ENCODE measurements at regions of chr3 and their contacts with region 1.

Region 1: DNA sequence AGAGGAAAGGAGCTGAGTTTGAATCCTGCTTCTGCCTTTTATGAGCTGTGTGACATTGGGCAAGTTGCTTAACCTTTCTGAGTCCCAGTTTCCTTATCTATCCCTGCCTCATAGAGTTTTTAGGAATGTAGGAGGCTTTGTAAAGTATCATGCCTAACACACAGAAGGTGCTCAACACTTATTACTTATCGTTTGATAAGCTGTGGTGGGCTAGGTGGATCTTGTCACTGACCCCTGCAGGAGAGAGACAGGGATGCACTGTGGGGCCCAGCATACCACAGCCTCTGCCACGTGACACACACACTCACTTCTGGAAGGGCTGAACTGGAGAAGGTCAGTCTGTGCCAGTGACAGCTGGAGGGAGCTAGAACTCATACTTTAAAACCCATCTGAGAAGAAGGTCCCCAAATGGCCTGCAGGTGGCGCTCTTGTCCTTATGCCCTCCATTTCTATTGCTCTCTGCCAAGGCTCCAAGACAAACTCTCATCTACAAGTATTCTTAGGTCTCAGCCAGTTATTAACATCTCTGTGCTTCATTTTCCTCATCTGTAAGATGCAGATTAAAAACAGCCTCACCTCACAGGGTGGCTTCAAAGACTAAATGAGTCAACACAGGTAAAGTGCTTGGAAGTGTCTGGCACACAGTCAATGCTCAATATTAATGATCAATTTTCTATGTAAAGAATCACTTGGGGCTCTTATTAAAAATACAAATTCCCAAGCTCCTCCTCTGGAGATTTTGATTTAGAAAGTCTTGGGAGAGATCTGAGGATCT is 57.5 kb upstream of the HACD2 start:
- DNase-seq: peak; percentile 56
- H3K4me3 ChIP-seq: no peak overlapping the region
- CTCF ChIP-seq: peak; percentile 67

Region 2: DNA sequence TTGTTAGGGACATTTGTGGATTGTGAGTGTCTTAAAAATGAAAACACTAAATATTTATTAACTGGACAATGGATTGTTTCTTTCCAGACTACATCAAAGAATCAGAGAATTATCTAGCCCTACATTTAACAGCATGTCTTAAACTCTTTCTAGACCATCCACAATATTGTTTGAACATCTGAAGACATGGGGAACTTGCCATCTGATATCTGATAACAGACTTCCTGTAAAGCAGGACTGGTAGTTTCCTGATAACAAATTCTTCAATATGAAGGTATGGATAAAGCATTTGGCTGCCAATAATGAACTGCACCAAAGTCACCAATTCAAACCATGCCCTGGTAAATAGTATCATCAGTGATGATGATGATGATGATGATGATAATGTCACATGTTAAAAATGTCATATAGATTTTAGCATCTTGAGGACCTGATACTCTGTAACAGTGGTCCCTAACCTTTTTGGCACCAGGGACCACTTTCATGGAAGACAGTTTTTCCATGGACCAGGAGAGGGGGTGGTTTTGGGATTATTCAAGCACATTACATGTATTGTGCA is 31.2 kb before region 1 on chr3:
- CTCF ChIA-PET with region 1: interaction called, 13 read pairs
- POLR2A ChIA-PET with region 1: no interaction called
- DNase-seq: no peak
- H3K4me3 ChIP-seq: no peak overlapping the region
- CTCF ChIP-seq: no peak

Region 3: GRCh38 chr3:123632161-123632655 is 10.2 kb before region 1 on chr3:
- CTCF ChIA-PET with region 1: interaction called, 54 read pairs
- POLR2A ChIA-PET with region 1: interaction called, 5 read pairs
- DNase-seq: peak; percentile 68
- H3K4me3 ChIP-seq: no peak overlapping the region
- CTCF ChIP-seq: no peak

Region 4: GRCh38 chr3:123672429-123673146 is 30.2 kb after region 1 on chr3:
- CTCF ChIA-PET with region 1: interaction called, 172 read pairs
- POLR2A ChIA-PET with region 1: no interaction called
- DNase-seq: no peak
- H3K4me3 ChIP-seq: no peak overlapping the region
- CTCF ChIP-seq: no peak

Region 5: DNA sequence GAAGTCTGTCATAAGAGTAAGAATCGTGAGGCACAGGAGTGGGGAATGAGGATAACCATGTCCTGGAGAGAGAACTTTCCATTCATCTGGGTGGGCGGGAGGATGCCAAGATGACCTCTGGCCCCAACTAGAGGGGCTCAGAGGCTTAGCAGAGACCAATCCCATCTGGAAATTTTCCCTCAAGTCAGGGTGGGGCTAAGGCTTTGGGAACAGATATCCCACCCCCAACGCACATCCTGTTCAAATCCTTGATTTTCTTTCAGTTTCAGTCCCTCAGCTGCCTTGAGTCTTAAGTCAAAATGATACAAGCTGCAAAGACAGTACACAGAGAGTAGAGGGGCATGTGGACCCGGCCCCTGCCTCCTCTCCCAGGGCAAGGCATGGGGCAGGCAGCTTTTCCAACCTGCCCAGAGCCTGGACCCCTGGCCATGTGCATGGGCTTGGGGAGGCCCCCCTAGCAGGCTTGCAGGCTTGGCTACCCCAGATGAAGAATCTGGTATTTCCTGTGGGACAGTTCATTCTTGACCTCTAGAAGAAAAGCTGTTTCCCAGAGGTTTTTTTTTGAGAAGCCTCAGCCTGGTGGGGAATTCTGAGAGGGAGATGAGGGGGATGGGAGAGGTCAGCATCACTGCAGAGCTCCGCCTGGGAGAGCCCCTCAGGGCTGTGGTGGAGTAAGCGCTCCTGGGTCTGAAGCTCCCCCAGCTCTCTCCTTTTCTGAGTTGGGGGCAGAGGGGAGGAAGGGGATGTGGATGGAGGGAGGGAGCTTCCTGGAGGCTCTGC is 52.2 kb after region 1 on chr3:
- CTCF ChIA-PET with region 1: interaction called, 436 read pairs
- POLR2A ChIA-PET with region 1: interaction called, 3 read pairs
- DNase-seq: no peak
- H3K4me3 ChIP-seq: no peak overlapping the region
- CTCF ChIP-seq: no peak

Region 6: GRCh38 chr3:123712077-123712860 is 69.9 kb after region 1 on chr3:
- CTCF ChIA-PET with region 1: interaction called, 436 read pairs
- POLR2A ChIA-PET with region 1: no interaction called
- DNase-seq: no peak
- H3K4me3 ChIP-seq: no peak overlapping the region
- CTCF ChIP-seq: no peak

Measured in AG04449 (cell line).